HEK293 (cell line): ENCODE measurements at regions of chr5 and their contacts with region 1.

Region 1: DNA sequence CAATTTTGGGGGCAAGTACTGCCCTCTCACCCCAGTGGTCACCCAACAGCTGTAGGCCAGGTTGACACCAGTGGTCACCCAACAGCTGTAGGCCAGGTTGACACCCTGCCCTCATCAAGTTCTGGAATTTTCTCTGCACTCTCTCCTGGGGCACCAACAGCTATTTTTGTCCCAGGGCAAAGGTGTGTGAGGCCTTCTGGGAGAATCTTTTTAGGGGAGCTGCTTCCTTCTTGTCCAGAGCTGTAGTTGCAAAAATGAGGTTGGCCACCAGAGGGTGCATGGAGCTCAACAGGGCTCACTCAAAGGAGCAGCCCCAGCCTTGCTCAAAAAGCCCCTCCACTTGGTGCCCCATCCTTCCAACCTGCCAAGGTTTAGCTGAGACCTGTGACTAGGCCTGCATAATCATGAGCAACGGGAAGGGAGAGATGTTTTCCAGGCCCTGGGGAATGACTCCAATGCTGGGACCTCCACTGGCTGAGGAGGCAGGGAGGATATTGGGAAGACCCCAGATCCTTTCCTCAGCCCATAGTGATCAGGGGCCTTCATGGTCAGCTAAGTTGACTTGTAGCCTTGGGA is 10.6 kb upstream of the P4HA2 start:
- H3K4me3 ChIP-seq: no peak overlapping the region
- H3K27ac ChIP-seq: no peak overlapping the region
- H3K4me1 ChIP-seq: no peaks in the 10 kb centered on the region
- CTCF ChIP-seq: peak; percentile 52; the same call in 1 of the 2 replicates

Region 2: GRCh38 chr5:132064738-132065331 is 173.4 kb before region 1 on chr5:
- CTCF ChIA-PET with region 1: interaction called, 10 read pairs
- POLR2A ChIA-PET with region 1: no interaction called
- H3K4me3 ChIP-seq: no peak overlapping the region
- H3K27ac ChIP-seq: no peak overlapping the region
- H3K4me1 ChIP-seq: no peaks in the 10 kb centered on the region
- CTCF ChIP-seq: peak; percentile 69; the same call in 1 of the 2 replicates

Region 3: GRCh38 chr5:132215329-132215728 is 22.9 kb before region 1 on chr5:
- CTCF ChIA-PET with region 1: interaction called, 19 read pairs
- POLR2A ChIA-PET with region 1: interaction called, 3 read pairs
- H3K4me3 ChIP-seq: no peak overlapping the region
- H3K27ac ChIP-seq: no peak overlapping the region
- H3K4me1 ChIP-seq: 0 out of 2 replicates have a peak, but pooled peaks cover 2% of the 10 kb centered on the region
- CTCF ChIP-seq: no peak

Region 4: GRCh38 chr5:132251220-132251725 is 13.0 kb after region 1 on chr5:
- CTCF ChIA-PET with region 1: interaction called, 52 read pairs
- POLR2A ChIA-PET with region 1: no interaction called
- H3K4me3 ChIP-seq: no peak overlapping the region
- H3K27ac ChIP-seq: no peak overlapping the region
- H3K4me1 ChIP-seq: no peaks in the 10 kb centered on the region
- CTCF ChIP-seq: no peak

Region 5: DNA sequence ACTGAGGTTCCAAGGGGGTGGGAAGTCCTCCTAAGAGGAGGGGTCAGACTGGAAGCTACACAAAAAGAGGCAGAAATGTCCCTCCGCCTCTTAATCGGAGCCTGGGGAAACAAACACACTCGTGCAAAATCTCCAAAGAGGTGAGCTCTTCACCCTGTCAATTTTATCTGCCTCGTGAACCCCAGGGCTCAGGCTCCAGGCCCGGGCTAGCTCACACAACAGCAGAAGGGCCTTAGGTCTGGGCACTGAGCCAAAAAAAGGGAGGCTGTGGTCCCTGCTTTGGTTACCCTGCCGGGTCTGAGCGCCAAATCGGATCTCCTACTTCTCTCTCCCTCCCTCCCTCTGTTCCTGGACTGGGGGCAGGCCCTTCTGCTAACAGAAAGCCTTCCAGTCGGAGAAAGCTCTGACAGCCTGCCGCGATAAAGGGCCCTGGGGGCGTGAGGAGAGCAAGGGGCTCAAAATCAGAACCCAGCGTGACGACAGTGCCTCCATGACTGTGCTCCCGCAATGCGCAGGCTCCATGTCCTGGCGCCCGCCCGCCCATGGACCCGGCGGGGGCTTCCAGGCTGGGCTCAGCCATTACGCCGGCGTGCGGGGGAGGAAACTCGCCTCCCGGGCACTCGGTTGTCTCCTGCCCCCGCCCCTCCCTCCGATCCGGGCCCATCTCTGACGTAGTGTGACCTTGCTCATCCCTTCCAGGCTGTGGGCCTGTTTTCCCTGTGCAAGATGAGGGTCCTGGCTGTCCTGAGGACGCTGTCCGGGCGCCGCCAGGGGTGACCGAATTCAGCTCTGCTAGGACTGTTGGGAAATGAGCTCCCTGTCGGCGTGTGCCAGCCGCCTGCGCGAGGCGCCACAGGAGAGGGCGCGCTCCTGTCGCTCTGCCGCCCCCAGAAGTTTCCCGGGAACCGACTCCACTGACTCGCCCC is 55.1 kb after region 1 on chr5:
- CTCF ChIA-PET with region 1: interaction called, 8 read pairs
- POLR2A ChIA-PET with region 1: interaction called, 10 read pairs
- H3K4me3 ChIP-seq: peak overlapping the region; percentile 41
- H3K27ac ChIP-seq: peak overlapping the region; percentile 96
- H3K4me1 ChIP-seq: peaks cover 4% of the 10 kb centered on the region; the same call in 1 of the 2 replicates
- CTCF ChIP-seq: peak; percentile 91

Region 6: DNA sequence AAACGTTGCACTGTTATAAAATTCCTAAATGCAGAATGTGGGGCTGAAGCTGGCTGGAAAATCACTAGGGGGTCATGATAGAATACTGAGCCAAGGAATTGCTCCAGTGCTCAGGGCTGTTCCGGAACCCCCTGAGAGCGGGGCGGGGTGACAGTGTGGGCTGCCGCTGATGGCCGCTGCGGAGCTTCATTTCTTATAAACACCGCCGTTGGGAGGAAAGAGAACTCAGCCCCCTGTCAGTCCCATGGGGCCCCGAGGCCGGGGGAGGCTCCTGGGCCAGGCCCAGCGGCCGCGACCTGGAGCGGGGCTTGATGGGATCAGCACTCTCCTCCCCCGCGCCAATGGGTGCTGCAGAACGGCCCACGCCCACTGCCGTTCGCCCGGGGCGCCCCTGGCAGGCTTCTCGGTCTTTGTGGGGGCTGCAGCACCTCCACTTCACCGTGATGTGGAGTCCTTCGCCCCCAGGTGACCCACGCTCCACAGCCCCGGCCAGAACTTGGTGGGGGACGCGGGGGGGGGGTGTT is 257.5 kb after region 1 on chr5:
- CTCF ChIA-PET with region 1: interaction called, 42 read pairs
- POLR2A ChIA-PET with region 1: no interaction called
- H3K4me3 ChIP-seq: peak overlapping the region; percentile 54
- H3K27ac ChIP-seq: peak overlapping the region; percentile 66; the same call in 1 of the 2 replicates
- H3K4me1 ChIP-seq: peaks cover 6% of the 10 kb centered on the region
- CTCF ChIP-seq: peak; percentile 36; the same call in 1 of the 2 replicates